PC-3 (cell line): ENCODE measurements at regions of chr18 and their contacts with region 1.

Region 1: DNA sequence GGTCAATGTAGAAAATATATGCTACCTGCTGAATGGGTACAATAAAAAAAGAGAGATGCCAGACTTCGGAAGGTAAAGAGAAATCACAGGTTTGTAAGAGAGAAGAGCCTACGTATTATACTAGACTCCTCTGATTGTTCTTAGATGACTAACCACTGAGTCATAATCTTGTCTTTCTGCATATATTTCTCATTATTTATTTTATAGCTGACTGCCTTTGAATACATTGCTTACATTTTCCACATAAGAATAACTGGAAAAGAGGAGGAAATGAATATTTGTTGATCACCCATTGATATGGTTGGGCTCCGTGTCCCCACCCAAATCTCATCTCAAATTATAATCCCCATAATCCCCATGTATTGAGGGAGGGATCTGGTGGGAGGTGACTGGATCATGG is 90.3 kb upstream of the RAB27B start:
- DNase-seq: peak; percentile 90
- ATAC-seq: peak; percentile 82
- H3K4me3 ChIP-seq: no peak overlapping the region
- H3K27ac ChIP-seq: peak overlapping the region; percentile 95
- H3K4me1 ChIP-seq: peaks cover 32% of the 10 kb centered on the region
- H3K27me3 ChIP-seq: no peaks in the 10 kb centered on the region
- CTCF ChIP-seq: no peak

Region 2: DNA sequence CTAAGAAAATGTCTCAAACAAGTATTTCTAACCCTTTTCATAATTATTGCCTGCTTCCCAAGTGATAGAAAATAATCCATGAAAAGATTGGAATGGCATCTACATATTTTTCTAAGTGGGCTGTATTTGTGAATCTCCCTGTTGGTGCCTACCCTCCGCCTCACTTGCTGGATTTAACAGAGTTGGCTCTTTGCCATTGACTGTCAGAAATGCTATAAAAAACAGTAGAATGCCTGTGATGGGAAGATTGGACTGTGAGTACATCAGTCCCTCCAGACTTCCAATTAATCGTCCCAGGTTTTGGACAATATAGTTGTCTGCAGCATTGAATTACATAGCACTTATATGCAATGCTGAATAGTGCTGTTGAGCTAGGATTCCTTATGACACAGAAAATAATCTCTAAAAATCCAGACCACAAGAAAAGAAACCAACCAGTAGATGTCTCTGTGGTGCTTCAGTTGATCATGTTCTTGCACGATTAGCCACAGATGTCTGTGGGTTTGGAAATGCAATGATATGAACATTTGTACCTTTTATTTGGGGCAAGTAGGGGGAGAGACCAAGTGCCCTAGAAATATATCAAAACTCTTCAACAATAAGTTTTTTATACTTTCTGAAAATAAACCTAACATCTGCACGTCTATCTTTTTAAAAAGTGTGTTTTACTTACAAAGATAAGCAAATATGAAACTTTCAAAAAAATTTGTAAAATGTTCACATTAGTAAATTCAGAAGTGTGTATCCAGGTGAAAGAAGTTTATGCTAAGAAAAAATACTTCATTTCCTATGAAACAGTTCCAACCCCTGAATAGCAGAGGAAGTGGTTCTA is 58.5 kb before region 1 on chr18:
- CTCF ChIA-PET with region 1: interaction called, 5 read pairs
- POLR2A ChIA-PET with region 1: no interaction called
- intact Hi-C with region 1: loop called (anchors 5 kb)
- DNase-seq: peak; percentile 88
- ATAC-seq: peak; percentile 93
- H3K4me3 ChIP-seq: no peak overlapping the region
- H3K27ac ChIP-seq: no peak overlapping the region
- H3K4me1 ChIP-seq: no peaks in the 10 kb centered on the region; the same call in 1 of the 2 replicates
- H3K27me3 ChIP-seq: no peaks in the 10 kb centered on the region
- CTCF ChIP-seq: peak; percentile 89

Region 3: DNA sequence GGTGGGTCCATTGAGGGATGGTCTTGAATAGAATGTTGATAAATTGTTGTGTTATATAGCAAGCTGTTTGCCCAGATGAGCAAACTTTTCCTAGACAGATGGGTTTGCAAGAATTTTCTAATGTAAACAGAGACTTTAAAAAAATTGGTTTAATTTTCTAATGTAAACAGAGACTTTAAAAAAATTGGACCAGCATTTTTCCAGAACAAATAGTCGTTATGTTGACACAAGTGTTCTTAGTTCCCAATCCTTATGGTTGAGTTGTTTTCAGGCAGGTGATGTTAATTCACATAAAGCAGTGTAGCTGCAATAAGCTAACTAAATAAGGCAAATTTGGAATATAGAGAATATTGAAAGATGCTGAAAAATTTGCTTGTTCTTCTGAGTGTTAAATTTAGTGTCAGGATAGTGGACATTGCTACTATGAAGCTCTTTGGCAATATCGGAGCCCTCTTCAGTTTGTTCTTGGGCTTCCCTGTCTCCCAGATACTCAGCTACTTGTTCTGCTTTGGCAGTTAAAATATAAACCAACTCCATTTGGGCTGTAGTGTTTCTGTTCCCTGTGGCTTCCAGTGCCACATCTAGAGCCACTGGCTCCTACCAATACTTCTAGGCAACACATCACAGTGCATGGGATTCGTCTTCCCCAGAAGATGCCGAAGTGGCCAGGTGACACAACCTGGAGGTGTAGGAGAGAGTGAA is 41.2 kb before region 1 on chr18:
- CTCF ChIA-PET with region 1: no interaction called
- POLR2A ChIA-PET with region 1: no interaction called
- intact Hi-C with region 1: loop called (anchors 5 kb)
- DNase-seq: peak; percentile 8
- ATAC-seq: peak; percentile 77
- H3K4me3 ChIP-seq: no peak overlapping the region
- H3K27ac ChIP-seq: no peak overlapping the region
- H3K4me1 ChIP-seq: peaks cover 9% of the 10 kb centered on the region; the same call in 1 of the 2 replicates
- H3K27me3 ChIP-seq: no peaks in the 10 kb centered on the region
- CTCF ChIP-seq: no peak

Region 4: GRCh38 chr18:54712306-54712705 is 25.7 kb before region 1 on chr18:
- CTCF ChIA-PET with region 1: no interaction called
- POLR2A ChIA-PET with region 1: no interaction called
- intact Hi-C with region 1: loop called (anchors 1 kb)
- DNase-seq: peak; percentile 77
- ATAC-seq: peak; percentile 95
- H3K4me3 ChIP-seq: no peak overlapping the region
- H3K27ac ChIP-seq: peak overlapping the region; percentile 58
- H3K4me1 ChIP-seq: peaks cover 13% of the 10 kb centered on the region
- H3K27me3 ChIP-seq: no peaks in the 10 kb centered on the region
- CTCF ChIP-seq: no peak

Region 5: GRCh38 chr18:54766619-54767018 is 28.6 kb after region 1 on chr18:
- CTCF ChIA-PET with region 1: no interaction called
- POLR2A ChIA-PET with region 1: no interaction called
- intact Hi-C with region 1: loop called (anchors 1 kb)
- DNase-seq: peak; percentile 75
- ATAC-seq: peak; percentile 47
- H3K4me3 ChIP-seq: peak overlapping the region; percentile 54
- H3K27ac ChIP-seq: peak overlapping the region; percentile 99
- H3K4me1 ChIP-seq: peaks cover 56% of the 10 kb centered on the region
- H3K27me3 ChIP-seq: no peaks in the 10 kb centered on the region
- CTCF ChIP-seq: no peak

Region 6: DNA sequence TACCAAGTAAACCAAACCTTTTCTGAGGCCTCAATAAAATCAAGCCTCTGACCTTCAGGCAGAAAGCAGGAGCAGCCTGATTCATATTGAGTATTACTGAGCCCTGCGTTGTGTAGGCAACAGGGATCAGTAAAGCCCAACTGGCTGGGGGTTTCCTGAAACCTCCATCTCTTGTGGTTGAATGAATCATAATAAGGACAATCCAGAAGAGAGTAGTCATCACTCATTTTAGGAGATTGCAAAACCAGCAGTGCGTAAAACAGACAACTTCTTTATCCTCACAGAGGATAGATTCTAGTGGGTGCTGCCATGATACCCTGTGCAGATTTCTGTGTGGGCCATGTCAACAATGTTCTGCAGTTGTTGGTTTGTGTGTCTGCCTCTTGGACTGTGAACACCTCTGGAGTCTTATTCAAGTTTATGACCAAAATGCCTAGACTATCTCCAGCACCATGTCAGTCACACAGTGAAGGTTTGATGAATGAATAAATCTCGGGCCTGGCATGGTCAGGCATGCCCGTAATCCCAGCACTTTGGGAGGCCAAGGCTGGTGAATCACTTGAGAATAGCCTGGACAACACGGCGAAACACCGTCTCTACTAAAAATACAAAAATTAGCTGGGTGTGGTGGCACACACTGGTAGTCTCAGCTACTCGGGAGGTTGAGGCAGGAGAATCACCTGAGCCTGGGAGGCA is 38.4 kb after region 1 on chr18:
- CTCF ChIA-PET with region 1: no interaction called
- POLR2A ChIA-PET with region 1: no interaction called
- intact Hi-C with region 1: loop called (anchors 1 kb)
- DNase-seq: peak; percentile 97
- ATAC-seq: peak; percentile 90
- H3K4me3 ChIP-seq: no peak overlapping the region; the same call in 1 of the 2 replicates
- H3K27ac ChIP-seq: peak overlapping the region; percentile 98
- H3K4me1 ChIP-seq: peaks cover 43% of the 10 kb centered on the region
- H3K27me3 ChIP-seq: no peaks in the 10 kb centered on the region
- CTCF ChIP-seq: no peak

Region 7: DNA sequence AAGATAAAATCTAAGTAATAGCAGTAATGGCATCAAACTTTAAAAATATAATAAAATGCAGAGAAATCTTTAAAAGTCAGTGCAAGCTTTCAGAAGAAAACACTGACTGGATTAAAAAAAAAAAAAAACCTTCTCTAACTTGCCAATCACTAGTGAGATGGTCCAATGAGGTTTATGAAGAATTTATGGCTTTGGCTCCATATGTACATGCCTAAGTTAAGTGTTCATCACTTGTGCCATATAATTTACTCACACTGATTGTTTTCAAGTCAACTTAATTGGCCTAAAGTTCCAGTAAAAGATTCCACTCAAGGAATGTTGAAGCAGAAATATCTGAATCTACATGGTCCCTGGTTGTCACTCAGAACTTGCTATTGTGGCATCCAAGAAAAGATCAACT is 49.6 kb after region 1 on chr18:
- CTCF ChIA-PET with region 1: no interaction called
- POLR2A ChIA-PET with region 1: no interaction called
- intact Hi-C with region 1: no loop called
- DNase-seq: no peak
- ATAC-seq: no peak
- H3K4me3 ChIP-seq: no peak overlapping the region
- H3K27ac ChIP-seq: no peak overlapping the region
- H3K4me1 ChIP-seq: no peaks in the 10 kb centered on the region
- H3K27me3 ChIP-seq: no peaks in the 10 kb centered on the region
- CTCF ChIP-seq: no peak

Region 8: GRCh38 chr18:54828281-54828881 is 90.4 kb after region 1 on chr18 and contains the start of gene RAB27B:
- CTCF ChIA-PET with region 1: no interaction called
- POLR2A ChIA-PET with region 1: no interaction called
- intact Hi-C with region 1: loop called (anchors 1 kb)
- DNase-seq: peak; percentile 89
- ATAC-seq: peak; percentile 89
- H3K4me3 ChIP-seq: peak within 1 kb of the TSS; percentile 77
- H3K27ac ChIP-seq: peak within 1 kb of the TSS; percentile 94
- H3K4me1 ChIP-seq: peaks cover 50% of the 10 kb centered on the region
- H3K27me3 ChIP-seq: no peaks in the 10 kb centered on the region
- CTCF ChIP-seq: no peak
- total RNA-seq, gene RAB27B: 10.3 and 13.2 TPM in 2 replicates